Activated CD4-positive, alpha-beta T cell treated with anti-CD3 and anti-CD28 coated beads for 36 hours (primary cell): ENCODE measurements at regions of chr19 and their contacts with region 1.

Region 1: DNA sequence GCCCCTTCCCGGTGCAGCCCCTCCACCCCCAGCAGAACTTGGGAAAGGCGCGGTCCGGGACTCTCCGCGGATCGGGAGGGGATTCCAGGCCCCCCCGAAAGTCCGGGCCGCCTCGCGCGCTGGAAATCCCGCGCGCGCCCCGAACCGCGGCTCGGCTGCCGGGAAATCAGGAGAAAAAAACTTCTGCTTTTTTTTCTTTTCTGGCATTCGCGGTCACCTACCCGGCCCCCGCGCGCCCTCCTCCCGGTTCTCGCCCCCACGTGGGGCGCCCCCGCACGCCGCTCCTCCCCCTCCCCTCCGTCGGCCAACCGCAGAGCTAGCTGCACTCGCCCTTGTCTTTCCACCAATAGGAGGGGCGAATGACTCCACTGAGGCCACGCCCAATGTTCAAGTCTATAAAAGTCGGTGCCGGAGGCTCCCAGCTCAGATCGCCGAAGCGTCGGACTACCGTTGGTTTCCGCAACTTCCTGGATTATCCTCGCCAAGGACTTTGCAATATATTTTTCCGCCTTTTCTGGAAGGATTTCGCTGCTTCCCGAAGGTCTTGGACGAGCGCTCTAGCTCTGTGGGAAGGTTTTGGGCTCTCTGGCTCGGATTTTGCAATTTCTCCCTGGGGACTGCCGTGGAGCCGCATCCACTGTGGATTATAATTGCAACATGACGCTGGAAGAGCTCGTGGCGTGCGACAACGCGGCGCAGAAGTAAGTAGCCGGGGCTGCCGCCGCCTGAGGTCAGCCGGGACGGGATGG is at the start of gene GADD45B:
- DNase-seq: peak; percentile 98
- ATAC-seq: peak; percentile 53
- H3K4me3 Mint-ChIP-seq: peak within 1 kb of the TSS; percentile 94
- H3K27ac Mint-ChIP-seq: peak within 1 kb of the TSS; percentile 90
- H3K4me1 Mint-ChIP-seq: peaks cover 22% of the 10 kb centered on the region
- H3K27me3 Mint-ChIP-seq: no peaks in the 10 kb centered on the region
- total RNA-seq, gene GADD45B: 57.7 to 71.2 TPM

Region 2: GRCh38 chr19:2440515-2440914 is 35.4 kb before region 1 on chr19:
- CTCF ChIA-PET with region 1: no interaction called
- POLR2A ChIA-PET with region 1: no interaction called
- intact Hi-C with region 1: no loop called
- DNase-seq: no peak
- ATAC-seq: no peak
- H3K4me3 Mint-ChIP-seq: no peak overlapping the region
- H3K27ac Mint-ChIP-seq: no peak overlapping the region
- H3K4me1 Mint-ChIP-seq: no peaks in the 10 kb centered on the region
- H3K27me3 Mint-ChIP-seq: no peaks in the 10 kb centered on the region

Region 3: DNA sequence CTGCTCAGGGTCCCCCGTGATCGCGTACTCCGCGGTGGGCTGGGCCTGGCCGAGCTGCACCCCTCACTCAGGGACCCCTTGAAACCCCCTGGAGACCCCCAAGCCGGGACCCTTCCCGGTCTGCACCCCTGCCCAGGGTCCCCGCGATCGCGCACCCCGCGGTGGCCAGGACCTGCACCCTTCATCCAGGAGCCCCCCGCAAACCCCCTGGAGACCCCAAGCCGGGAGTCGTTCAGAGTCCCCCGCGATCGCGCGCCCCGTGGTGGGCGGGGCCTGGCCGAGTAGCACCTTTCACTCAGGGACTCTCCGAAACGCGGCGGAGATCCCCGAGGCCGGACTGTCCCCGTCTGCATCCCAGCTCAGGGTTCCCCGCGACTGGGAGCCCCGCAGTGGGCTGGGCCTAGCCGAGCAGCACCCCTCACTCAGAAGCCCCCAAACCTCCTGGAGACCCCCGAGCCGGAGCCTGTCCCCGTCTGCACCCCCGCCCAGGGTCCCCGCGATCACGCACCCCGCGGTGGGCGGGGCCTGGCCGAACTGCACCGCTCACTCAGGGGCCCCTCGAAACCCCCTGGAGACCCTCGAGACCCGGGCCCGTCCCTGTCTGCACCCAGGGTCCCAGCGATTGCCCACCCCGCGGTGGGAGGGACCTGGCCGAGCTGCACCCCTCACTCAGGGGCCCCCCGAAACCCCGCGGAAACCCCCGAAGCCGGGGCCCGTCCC is 19.9 kb before region 1 on chr19:
- CTCF ChIA-PET with region 1: interaction called, 9 read pairs
- POLR2A ChIA-PET with region 1: interaction called, 11 read pairs
- intact Hi-C with region 1: loop called in 1 of 2 experiments (anchors 1 kb)
- DNase-seq: peak; percentile 73
- ATAC-seq: peak; percentile 47
- H3K4me3 Mint-ChIP-seq: peak overlapping the region; percentile 84
- H3K27ac Mint-ChIP-seq: peak overlapping the region; percentile 88
- H3K4me1 Mint-ChIP-seq: peaks cover 16% of the 10 kb centered on the region
- H3K27me3 Mint-ChIP-seq: no peaks in the 10 kb centered on the region

Region 4: DNA sequence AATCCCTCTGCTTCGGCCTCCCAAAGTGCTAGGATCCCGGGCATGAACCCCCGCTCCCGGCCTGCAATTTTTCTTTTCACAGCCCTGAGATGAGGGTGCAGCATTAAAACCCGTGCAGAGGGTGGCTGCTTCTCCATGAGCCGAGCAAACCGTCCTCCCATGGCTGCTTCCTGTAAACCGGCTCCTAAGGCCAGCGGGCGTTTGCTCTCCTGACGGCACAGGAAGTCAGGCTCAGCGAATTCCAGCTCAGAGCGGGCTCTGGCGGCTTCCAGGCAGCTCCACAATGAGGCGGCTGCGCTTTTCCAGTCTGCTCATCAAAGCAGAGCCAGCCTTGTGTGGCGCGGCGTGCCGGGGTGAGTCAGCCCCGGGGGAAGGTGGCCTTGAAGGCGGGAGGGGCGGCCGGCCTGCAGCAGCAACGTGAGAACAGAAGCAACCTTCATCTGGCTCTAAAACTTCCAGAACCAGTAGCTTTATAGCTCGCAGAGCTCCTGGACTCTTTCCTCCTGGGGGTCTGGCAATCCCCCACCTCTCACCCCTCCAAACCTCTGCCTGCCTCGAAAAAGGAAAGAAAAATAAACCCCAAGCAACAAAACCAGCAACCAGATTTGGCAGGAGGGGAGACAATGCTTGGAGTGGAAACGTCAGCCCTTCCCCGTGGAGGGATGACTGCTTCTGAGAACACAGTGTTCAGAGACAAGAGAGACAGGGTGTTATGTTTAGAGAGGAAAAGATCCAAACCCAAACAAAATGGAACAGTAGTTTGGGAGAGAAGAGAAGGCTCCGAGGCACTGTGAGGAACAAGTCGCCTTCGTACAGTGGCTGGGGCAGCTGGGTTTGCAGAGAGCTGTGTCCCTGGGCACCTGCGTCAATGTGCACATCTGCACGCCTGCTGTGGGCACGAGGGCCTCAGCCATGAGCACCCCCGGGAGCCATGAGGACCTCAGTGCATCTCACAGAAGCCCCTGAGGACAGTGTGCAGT is 67.9 kb after region 1 on chr19:
- CTCF ChIA-PET with region 1: no interaction called
- POLR2A ChIA-PET with region 1: interaction called, 11 read pairs
- intact Hi-C with region 1: no loop called
- DNase-seq: peak; percentile 84
- ATAC-seq: peak; percentile 97
- H3K4me3 Mint-ChIP-seq: peak overlapping the region; percentile 21
- H3K27ac Mint-ChIP-seq: peak overlapping the region; percentile 7
- H3K4me1 Mint-ChIP-seq: peaks cover 9% of the 10 kb centered on the region
- H3K27me3 Mint-ChIP-seq: no peaks in the 10 kb centered on the region

Region 5: GRCh38 chr19:2578901-2579677 is 103.2 kb after region 1 on chr19:
- CTCF ChIA-PET with region 1: interaction called, 5 read pairs
- POLR2A ChIA-PET with region 1: interaction called, 6 read pairs
- intact Hi-C with region 1: loop called in 1 of 2 experiments (anchors 1 kb)
- DNase-seq: peak; percentile 81
- ATAC-seq: peak; percentile 69
- H3K4me3 Mint-ChIP-seq: no peak overlapping the region
- H3K27ac Mint-ChIP-seq: no peak overlapping the region
- H3K4me1 Mint-ChIP-seq: no peaks in the 10 kb centered on the region
- H3K27me3 Mint-ChIP-seq: peaks cover 8% of the 10 kb centered on the region

Region 6: DNA sequence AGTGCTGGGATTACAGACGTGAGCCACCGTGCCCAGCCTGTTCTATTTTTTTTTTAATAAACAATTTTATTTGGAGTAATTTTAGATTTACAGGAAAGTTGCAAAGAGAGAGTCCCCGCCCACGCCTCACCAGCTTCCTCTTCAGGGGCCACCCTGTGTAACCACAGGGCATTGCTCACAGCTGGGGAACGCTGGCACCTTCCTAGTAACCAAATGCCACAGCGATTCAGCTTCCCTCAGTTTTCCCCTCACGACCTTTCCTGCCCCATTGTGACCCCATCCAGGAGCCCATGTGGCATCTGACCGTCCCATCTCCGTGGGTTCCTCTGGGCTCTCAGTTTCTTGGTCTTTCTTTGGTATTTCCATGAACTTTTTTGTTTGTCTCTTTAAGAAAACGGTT is 142.7 kb after region 1 on chr19:
- CTCF ChIA-PET with region 1: interaction called, 14 read pairs
- POLR2A ChIA-PET with region 1: interaction called, 106 read pairs
- intact Hi-C with region 1: loop called in 1 of 2 experiments (anchors 2 kb)
- DNase-seq: peak; percentile 94
- ATAC-seq: no peak
- H3K4me3 Mint-ChIP-seq: peak overlapping the region; percentile 46
- H3K27ac Mint-ChIP-seq: peak overlapping the region; percentile 77
- H3K4me1 Mint-ChIP-seq: peaks cover 64% of the 10 kb centered on the region
- H3K27me3 Mint-ChIP-seq: no peaks in the 10 kb centered on the region

Region 7: DNA sequence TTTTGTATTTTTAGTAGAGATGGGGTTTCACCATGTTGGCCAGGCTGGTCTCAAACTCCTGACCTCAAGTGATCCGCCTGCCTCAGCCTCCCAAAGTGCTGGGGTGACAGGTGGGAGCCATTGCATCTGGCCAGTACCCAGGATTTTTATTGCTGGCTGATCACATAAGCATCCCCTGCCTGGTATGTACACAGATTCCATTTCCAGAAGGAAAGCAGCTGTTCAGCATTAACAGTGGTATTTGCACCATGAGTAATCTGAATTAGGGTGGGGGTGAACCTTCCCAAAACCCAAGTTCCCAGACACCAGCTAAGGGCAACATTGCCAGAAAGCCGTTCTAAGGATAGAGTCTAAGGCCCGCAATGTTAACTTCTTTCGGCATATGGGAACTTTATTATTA is 372.7 kb after region 1 on chr19:
- CTCF ChIA-PET with region 1: no interaction called
- POLR2A ChIA-PET with region 1: no interaction called
- intact Hi-C with region 1: no loop called
- DNase-seq: no peak
- ATAC-seq: no peak
- H3K4me3 Mint-ChIP-seq: no peak overlapping the region
- H3K27ac Mint-ChIP-seq: no peak overlapping the region
- H3K4me1 Mint-ChIP-seq: peaks cover 12% of the 10 kb centered on the region
- H3K27me3 Mint-ChIP-seq: no peaks in the 10 kb centered on the region